H1 (cell line): ENCODE measurements at regions of chr7 and their contacts with region 1.

Region 1: DNA sequence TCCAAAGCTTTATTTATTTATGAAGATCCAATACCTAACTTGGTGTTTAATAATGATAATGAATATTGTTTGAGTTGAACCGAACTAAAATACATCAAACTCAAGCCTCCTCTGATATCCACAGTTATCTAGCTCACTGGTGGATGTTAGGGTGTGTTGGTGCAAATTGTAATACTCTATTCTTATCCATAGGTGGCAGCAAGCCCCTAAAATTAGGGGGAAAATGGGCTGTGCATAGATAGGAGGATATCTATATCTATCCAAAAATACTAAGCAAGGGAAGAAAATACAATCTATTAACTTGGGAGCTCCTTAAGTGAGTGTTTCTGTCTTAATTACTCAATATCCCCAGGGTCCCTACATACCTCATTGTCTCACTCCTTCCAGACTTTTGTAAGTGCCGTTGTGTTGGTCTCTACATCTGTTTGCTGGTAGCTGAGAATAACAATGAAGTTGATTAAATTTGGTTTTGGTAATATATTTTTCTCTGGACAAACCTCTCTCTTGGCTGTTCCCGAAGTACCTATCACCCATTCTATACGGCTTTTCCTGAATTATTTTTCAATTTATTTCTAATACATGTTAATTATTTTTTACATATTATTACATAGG is 55.0 kb upstream of the VWDE start:
- DNase-seq: no peak
- H3K4me3 ChIP-seq: no peak overlapping the region
- H3K27ac ChIP-seq: no peak overlapping the region
- H3K4me1 ChIP-seq: no peaks in the 10 kb centered on the region
- H3K27me3 ChIP-seq: no peaks in the 10 kb centered on the region
- CTCF ChIP-seq: peak in 2 of 3 experiments; percentile 65 to 73; a peak in 3 of 4 replicates
- EP300 ChIP-seq: no peak
- POLR2A ChIP-seq: no peak
- RAD21 ChIP-seq: peak; percentile 83 to 85

Region 2: GRCh38 chr7:12337095-12337494 is 121.5 kb before region 1 on chr7:
- CTCF ChIA-PET with region 1: no interaction called
- POLR2A ChIA-PET with region 1: no interaction called
- DNase-seq: no peak
- H3K4me3 ChIP-seq: no peak overlapping the region
- H3K27ac ChIP-seq: no peak overlapping the region
- H3K4me1 ChIP-seq: peaks cover 0 to 3% (median 0%) of the 10 kb centered on the region in 4 experiments; a peak in 1 of 7 replicates
- H3K27me3 ChIP-seq: no peaks in the 10 kb centered on the region
- CTCF ChIP-seq: no peak
- EP300 ChIP-seq: no peak
- POLR2A ChIP-seq: no peak
- RAD21 ChIP-seq: no peak

Region 3: GRCh38 chr7:12378389-12378788 is 80.2 kb before region 1 on chr7:
- CTCF ChIA-PET with region 1: interaction called, 13 read pairs
- POLR2A ChIA-PET with region 1: no interaction called
- DNase-seq: no peak
- H3K4me3 ChIP-seq: no peak overlapping the region
- H3K27ac ChIP-seq: no peak overlapping the region
- H3K4me1 ChIP-seq: no peaks in the 10 kb centered on the region
- H3K27me3 ChIP-seq: no peaks in the 10 kb centered on the region
- CTCF ChIP-seq: no peak
- EP300 ChIP-seq: no peak
- POLR2A ChIP-seq: no peak
- RAD21 ChIP-seq: no peak

Region 4: DNA sequence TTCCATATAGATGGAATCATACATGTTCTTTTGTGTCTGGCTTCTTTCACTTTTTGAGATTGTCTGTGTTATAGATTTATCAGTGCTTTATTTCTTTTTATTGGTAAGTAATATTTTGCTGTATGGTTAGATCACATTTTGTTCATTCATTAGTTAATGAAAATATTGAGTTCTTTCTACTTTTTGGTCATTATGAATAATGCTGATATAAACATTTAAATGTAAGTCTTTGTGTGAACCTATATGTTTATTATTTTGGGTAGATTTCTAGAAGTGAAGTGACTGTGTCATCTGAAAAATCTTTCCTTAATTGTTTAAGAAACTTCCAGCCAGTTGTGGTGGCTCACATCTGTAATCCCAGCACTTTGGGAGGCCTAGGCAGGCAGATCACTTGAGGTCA is 43.6 kb before region 1 on chr7:
- CTCF ChIA-PET with region 1: interaction called, 12 read pairs
- POLR2A ChIA-PET with region 1: no interaction called
- DNase-seq: no peak
- H3K4me3 ChIP-seq: no peak overlapping the region
- H3K27ac ChIP-seq: no peak overlapping the region
- H3K4me1 ChIP-seq: no peaks in the 10 kb centered on the region; a peak in 1 of 7 replicates
- H3K27me3 ChIP-seq: no peaks in the 10 kb centered on the region
- CTCF ChIP-seq: no peak
- EP300 ChIP-seq: no peak
- POLR2A ChIP-seq: no peak
- RAD21 ChIP-seq: no peak

Region 5: DNA sequence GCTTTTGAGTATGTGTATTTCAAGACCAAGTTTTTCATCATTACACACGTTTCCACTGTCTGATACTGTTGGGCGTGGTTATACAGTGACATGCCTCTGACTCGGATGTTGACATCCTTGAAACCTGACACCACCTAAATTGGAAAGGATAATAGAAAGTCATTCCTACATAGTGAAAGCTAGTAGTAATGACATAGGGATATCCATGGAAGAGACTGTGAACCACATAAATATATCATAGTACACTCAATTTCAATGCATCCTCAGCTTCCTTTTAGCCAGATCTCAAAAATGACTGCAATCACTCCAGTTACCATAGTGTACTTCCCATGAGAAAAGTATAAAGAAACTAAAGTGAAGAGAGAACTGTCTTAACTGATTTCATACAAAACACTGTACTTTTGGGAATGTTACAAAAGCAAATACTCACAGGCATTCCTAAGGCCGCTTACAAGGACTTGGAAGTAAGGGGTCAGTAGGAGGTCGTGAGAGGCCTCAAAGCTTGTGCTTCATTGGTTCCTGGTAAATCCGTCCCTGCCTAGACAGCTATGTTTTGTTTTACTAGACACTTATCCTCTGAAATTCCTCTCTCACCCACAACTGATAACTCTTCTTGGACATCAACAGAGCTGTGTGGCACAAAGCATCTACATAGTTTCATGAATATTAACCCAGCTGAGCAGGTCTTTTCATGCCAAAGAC is 16.9 kb after region 1 on chr7:
- CTCF ChIA-PET with region 1: interaction called, 61 read pairs
- POLR2A ChIA-PET with region 1: no interaction called
- DNase-seq: no peak
- H3K4me3 ChIP-seq: no peak overlapping the region
- H3K27ac ChIP-seq: no peak overlapping the region
- H3K4me1 ChIP-seq: no peaks in the 10 kb centered on the region; a peak in 1 of 7 replicates
- H3K27me3 ChIP-seq: no peaks in the 10 kb centered on the region
- CTCF ChIP-seq: no peak
- EP300 ChIP-seq: no peak
- POLR2A ChIP-seq: no peak
- RAD21 ChIP-seq: no peak

Region 6: GRCh38 chr7:12518920-12519681 is 60.5 kb after region 1 on chr7:
- CTCF ChIA-PET with region 1: interaction called, 30 read pairs
- POLR2A ChIA-PET with region 1: no interaction called
- DNase-seq: peak in 1 of 2 experiments; percentile 75
- H3K4me3 ChIP-seq: no peak overlapping the region
- H3K27ac ChIP-seq: no peak overlapping the region
- H3K4me1 ChIP-seq: peaks cover 0 to 3% (median 0%) of the 10 kb centered on the region in 4 experiments; a peak in 1 of 7 replicates
- H3K27me3 ChIP-seq: no peaks in the 10 kb centered on the region
- CTCF ChIP-seq: peak; percentile 74 to 95 (median 82)
- EP300 ChIP-seq: no peak
- POLR2A ChIP-seq: no peak
- RAD21 ChIP-seq: peak; percentile 53 to 61

Region 7: GRCh38 chr7:12576071-12576470 is 117.4 kb after region 1 on chr7:
- CTCF ChIA-PET with region 1: no interaction called
- POLR2A ChIA-PET with region 1: no interaction called
- DNase-seq: no peak
- H3K4me3 ChIP-seq: no peak overlapping the region
- H3K27ac ChIP-seq: no peak overlapping the region
- H3K4me1 ChIP-seq: peaks cover 0 to 2% (median 0%) of the 10 kb centered on the region in 4 experiments; a peak in 1 of 7 replicates
- H3K27me3 ChIP-seq: peaks cover 3 to 13% (median 10%) of the 10 kb centered on the region in 4 experiments
- CTCF ChIP-seq: no peak
- EP300 ChIP-seq: no peak
- POLR2A ChIP-seq: no peak
- RAD21 ChIP-seq: no peak